Adrenal gland (tissue), 19 donors: ENCODE measurements at regions of chr18 and their contacts with region 1.

Region 1: GRCh38 chr18:30889519-30890301 is 152.8 kb downstream of the DSC3 start:
- DNase-seq: no peak
- H3K4me3 ChIP-seq: no peak overlapping the region
- H3K27ac ChIP-seq: no peak overlapping the region
- H3K4me1 ChIP-seq: no peaks in the 10 kb centered on the region
- H3K27me3 ChIP-seq: no peaks in the 10 kb centered on the region
- CTCF ChIP-seq: peak in 2 of 6 experiments; percentile 10 to 18
- POLR2A ChIP-seq: no peak

Region 2: GRCh38 chr18:31217038-31217849 is 327.5 kb after region 1 on chr18:
- intact Hi-C with region 1: loop called in 1 of 2 experiments (anchors 10 kb)
- DNase-seq: peak in 1 of 7 donors; percentile 10
- H3K4me3 ChIP-seq: no peak overlapping the region
- H3K27ac ChIP-seq: no peak overlapping the region
- H3K4me1 ChIP-seq: no peaks in the 10 kb centered on the region
- H3K27me3 ChIP-seq: no peaks in the 10 kb centered on the region
- CTCF ChIP-seq: no peak
- POLR2A ChIP-seq: no peak